ENCODE measurements at regions of chr17 and their contacts with region 1.

Region 1: DNA sequence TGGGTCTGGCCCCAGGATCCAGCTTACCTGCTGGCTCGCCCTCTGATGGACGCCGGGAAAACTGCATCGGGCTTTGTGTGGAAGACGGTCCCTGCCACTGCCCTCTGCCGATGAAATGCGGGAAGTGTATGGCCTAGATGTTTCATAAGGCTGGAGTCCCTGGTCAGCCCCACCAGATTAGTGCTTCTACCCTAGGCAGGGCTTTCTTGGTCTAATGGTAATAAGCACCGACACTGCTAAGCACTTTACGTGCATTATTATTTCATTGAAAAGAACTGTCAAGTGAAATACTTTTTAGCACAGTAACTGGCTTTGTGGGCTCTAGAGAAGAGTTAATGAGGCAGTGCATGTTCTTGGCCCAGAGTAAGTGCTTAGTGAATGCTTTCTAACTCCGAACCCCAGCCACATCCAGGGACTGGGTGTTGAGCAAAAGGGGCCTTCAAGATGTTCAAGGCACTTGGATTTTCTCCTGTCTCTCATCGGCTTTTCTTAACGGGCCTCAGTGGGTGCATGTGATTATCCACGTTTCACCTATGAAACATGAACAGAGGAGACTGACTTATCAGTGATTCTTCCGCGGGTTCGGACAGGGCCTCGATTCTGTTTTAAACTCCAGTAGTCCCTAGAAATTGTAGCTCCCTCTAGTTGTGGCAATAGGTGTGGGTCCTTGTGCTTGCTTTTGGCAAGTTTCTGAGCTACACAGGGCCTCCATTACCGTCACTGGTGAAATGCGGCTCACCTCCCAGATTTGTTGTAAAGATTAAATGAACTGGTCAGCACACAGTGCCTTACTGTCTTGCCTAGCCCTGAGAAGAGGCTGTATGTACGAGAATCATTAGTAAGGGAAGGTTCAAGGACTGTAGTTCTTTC is 6.6 kb downstream of the TRAF4 start:
- DNase-seq: peak; percentile 91
- H3K4me3 Mint-ChIP-seq: no peak overlapping the region
- H3K27ac Mint-ChIP-seq: peak overlapping the region; percentile 31
- H3K4me1 Mint-ChIP-seq: peaks cover 36% of the 10 kb centered on the region
- H3K27me3 Mint-ChIP-seq: no peaks in the 10 kb centered on the region

Region 2: GRCh38 chr17:28616281-28616680 is 134.1 kb before region 1 on chr17:
- CTCF ChIA-PET with region 1: no interaction called
- POLR2A ChIA-PET with region 1: no interaction called
- DNase-seq: no peak
- H3K4me3 Mint-ChIP-seq: no peak overlapping the region
- H3K27ac Mint-ChIP-seq: no peak overlapping the region
- H3K4me1 Mint-ChIP-seq: peaks cover 3% of the 10 kb centered on the region
- H3K27me3 Mint-ChIP-seq: no peaks in the 10 kb centered on the region

Region 3: DNA sequence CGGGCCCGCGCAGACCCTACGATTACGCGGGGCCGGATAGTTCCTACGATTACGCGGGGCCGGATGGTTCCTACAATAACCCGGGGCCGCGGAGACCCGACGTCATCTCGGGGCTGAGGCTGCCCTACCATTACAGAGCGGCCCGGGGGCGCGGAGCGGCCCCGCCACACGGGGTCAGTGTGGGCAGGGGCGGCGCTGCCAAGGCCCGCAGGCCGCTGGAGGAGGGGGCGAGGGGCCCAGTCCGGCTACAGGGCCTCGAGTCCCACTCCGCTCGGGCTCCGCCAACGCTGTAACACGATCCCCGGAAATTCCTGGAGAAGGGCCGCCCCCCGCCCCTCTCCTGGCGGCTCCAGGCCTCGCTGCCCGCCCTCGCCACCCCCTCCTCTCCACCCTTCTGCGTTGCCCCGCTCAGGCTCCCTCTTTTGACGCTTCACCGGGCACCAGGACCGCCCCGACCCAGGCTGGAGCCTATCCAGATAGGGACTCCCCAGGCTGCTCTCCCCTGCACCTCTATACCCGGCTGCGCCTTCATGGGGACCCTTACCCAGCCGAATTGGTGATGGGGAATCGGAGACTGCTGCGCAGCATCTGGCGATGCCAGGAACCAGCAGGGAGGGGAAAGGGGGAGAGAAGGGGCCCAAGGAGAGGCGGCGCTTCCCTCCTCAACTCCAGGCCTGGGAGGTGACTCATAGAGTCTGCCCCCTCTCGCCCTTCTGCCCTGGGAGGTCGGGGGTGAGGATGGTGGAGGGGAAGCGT is 32.7 kb before region 1 on chr17 and contains the start of gene RAB34:
- CTCF ChIA-PET with region 1: interaction called, 13 read pairs
- POLR2A ChIA-PET with region 1: no interaction called
- DNase-seq: no peak
- H3K4me3 Mint-ChIP-seq: peak within 1 kb of the TSS; percentile 70
- H3K27ac Mint-ChIP-seq: peak within 1 kb of the TSS; percentile 82
- H3K4me1 Mint-ChIP-seq: peaks cover 38% of the 10 kb centered on the region
- H3K27me3 Mint-ChIP-seq: peaks cover 13% of the 10 kb centered on the region
- total RNA-seq, gene RAB34: 11.0 to 11.8 TPM

Region 4: GRCh38 chr17:28763804-28764266 is 13.4 kb after region 1 on chr17:
- CTCF ChIA-PET with region 1: interaction called, 64 read pairs
- POLR2A ChIA-PET with region 1: no interaction called
- DNase-seq: peak; percentile 86
- H3K4me3 Mint-ChIP-seq: no peak overlapping the region
- H3K27ac Mint-ChIP-seq: no peak overlapping the region
- H3K4me1 Mint-ChIP-seq: peaks cover 8% of the 10 kb centered on the region
- H3K27me3 Mint-ChIP-seq: no peaks in the 10 kb centered on the region

Region 5: GRCh38 chr17:28773736-28774135 is 23.3 kb after region 1 on chr17:
- CTCF ChIA-PET with region 1: interaction called, 10 read pairs
- POLR2A ChIA-PET with region 1: no interaction called
- DNase-seq: no peak
- H3K4me3 Mint-ChIP-seq: no peak overlapping the region
- H3K27ac Mint-ChIP-seq: no peak overlapping the region
- H3K4me1 Mint-ChIP-seq: peaks cover 20% of the 10 kb centered on the region
- H3K27me3 Mint-ChIP-seq: no peaks in the 10 kb centered on the region

Region 6: GRCh38 chr17:28792877-28793661 is 42.7 kb after region 1 on chr17:
- CTCF ChIA-PET with region 1: interaction called, 3 read pairs
- POLR2A ChIA-PET with region 1: interaction called, 10 read pairs
- DNase-seq: no peak
- H3K4me3 Mint-ChIP-seq: no peak overlapping the region
- H3K27ac Mint-ChIP-seq: no peak overlapping the region
- H3K4me1 Mint-ChIP-seq: peaks cover 18% of the 10 kb centered on the region
- H3K27me3 Mint-ChIP-seq: no peaks in the 10 kb centered on the region